ENCODE measurements at regions of chr18 and their contacts with region 1.

Region 1: DNA sequence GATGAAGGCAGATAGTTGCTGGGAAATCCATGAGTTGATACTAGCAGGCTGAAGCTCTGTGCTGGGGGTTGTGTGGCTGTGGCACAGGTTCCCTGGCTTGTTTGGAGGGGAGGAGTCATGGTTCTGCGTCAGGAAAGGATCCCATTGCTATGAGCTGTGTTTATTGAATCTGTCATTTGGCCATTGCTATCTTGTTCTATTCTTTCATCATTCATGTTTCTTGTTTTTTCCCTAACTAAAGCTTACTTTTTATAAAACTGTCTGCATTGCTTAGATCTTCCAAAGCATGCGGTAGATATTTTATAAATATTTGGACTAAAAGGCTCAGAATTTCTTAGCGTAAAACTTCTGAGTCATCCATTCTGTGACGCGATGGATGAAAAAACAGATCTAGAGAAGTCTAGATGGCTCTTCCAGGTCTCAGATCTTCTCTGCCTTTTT is 335.3 kb downstream of the PTPRM start:
- DNase-seq: no peak
- ATAC-seq: no peak
- H3K4me3 ChIP-seq: no peak overlapping the region
- H3K27ac ChIP-seq: no peak overlapping the region
- H3K4me1 ChIP-seq: no peaks in the 10 kb centered on the region
- H3K27me3 ChIP-seq: no peaks in the 10 kb centered on the region
- CTCF ChIP-seq: no peak
- EP300 ChIP-seq: no peak
- POLR2A ChIP-seq: no peak
- RAD21 ChIP-seq: no peak

Region 2: GRCh38 chr18:7488571-7488970 is 413.8 kb before region 1 on chr18:
- CTCF ChIA-PET with region 1: no interaction called
- POLR2A ChIA-PET with region 1: no interaction called
- in situ Hi-C with region 1: no loop called
- intact Hi-C with region 1: no loop called
- DNase-seq: no peak
- ATAC-seq: peak; percentile 50; the same call in 1 of the 3 replicates
- H3K4me3 ChIP-seq: no peak overlapping the region
- H3K27ac ChIP-seq: no peak overlapping the region
- H3K4me1 ChIP-seq: no peaks in the 10 kb centered on the region
- H3K27me3 ChIP-seq: peaks cover 0 to 4% of the 10 kb centered on the region in 2 experiments; a peak in 3 of 5 replicates
- CTCF ChIP-seq: no peak
- EP300 ChIP-seq: no peak
- POLR2A ChIP-seq: no peak
- RAD21 ChIP-seq: no peak

Region 3: GRCh38 chr18:7545734-7546133 is 356.7 kb before region 1 on chr18:
- CTCF ChIA-PET with region 1: no interaction called
- POLR2A ChIA-PET with region 1: no interaction called
- in situ Hi-C with region 1: no loop called
- intact Hi-C with region 1: no loop called
- DNase-seq: no peak
- ATAC-seq: no peak
- H3K4me3 ChIP-seq: no peak overlapping the region
- H3K27ac ChIP-seq: no peak overlapping the region
- H3K4me1 ChIP-seq: no peaks in the 10 kb centered on the region
- H3K27me3 ChIP-seq: no peaks in the 10 kb centered on the region
- CTCF ChIP-seq: no peak
- EP300 ChIP-seq: no peak
- POLR2A ChIP-seq: no peak
- RAD21 ChIP-seq: no peak

Region 4: DNA sequence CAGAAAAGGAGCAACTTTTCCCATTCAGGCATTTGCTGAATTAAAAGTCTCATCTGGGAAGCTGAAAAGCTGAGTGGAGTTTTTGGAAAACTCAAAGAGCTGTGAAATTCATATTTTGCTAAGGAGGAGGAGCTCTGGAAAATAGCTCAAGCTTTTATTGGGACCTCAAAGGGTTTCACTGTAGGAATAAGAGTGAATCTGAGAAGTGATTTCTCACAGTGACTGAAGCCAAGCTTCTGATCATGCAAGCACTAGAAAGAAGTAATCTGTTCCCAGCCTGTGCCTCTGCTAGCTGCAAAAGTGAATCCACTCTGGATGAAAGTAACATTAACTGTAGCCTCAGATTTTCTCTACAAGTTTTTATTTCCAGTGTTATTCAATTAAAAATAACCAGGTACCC is 52.0 kb before region 1 on chr18:
- CTCF ChIA-PET with region 1: no interaction called
- POLR2A ChIA-PET with region 1: no interaction called
- in situ Hi-C with region 1: no loop called
- intact Hi-C with region 1: loop called (anchors 5 kb)
- DNase-seq: no peak
- ATAC-seq: no peak
- H3K4me3 ChIP-seq: no peak overlapping the region
- H3K27ac ChIP-seq: no peak overlapping the region
- H3K4me1 ChIP-seq: no peaks in the 10 kb centered on the region
- H3K27me3 ChIP-seq: no peaks in the 10 kb centered on the region
- CTCF ChIP-seq: no peak
- EP300 ChIP-seq: no peak
- POLR2A ChIP-seq: no peak
- RAD21 ChIP-seq: no peak

Region 5: GRCh38 chr18:7871560-7872456 is 30.6 kb before region 1 on chr18:
- CTCF ChIA-PET with region 1: no interaction called
- POLR2A ChIA-PET with region 1: no interaction called
- in situ Hi-C with region 1: no loop called
- intact Hi-C with region 1: loop called (anchors 2 kb)
- DNase-seq: peak; percentile 49
- ATAC-seq: peak; percentile 62
- H3K4me3 ChIP-seq: no peak overlapping the region
- H3K27ac ChIP-seq: no peak overlapping the region
- H3K4me1 ChIP-seq: peaks cover 34% of the 10 kb centered on the region
- H3K27me3 ChIP-seq: no peaks in the 10 kb centered on the region
- CTCF ChIP-seq: no peak
- EP300 ChIP-seq: no peak
- POLR2A ChIP-seq: no peak
- RAD21 ChIP-seq: no peak